Transverse colon (tissue), 4 donors: ENCODE measurements at regions of chr15 and their contacts with region 1.

Region 1: DNA sequence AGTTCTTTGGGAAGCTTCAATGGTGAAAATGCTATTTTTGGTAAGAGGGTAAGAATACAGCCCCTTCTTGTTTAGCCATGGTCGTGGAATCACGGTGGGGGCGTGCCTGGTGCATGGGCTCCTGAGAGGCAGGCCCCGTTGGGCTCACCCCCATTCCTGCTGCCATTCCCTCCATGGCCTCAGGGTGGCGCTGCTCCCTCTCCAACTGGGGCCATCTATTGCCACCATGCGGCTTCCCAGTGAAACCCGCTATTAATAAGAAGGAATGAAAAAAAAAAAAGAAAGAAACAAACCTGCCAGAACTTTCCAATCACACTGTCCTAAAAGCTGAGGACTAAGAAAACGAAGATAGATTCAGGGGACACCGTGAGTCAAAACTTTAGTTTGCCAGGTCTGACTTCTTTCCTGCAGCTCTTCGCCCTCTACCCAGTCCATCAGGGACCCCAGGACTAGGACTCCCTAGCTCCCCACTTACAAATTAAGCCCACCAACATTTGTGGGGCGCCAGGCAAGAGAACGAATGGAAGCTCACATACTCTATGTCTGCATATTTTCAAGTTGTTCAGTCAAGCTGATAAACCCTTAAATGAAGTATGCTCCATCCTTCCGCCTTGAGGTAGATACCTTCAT is 30.6 kb upstream of the ABHD2 start:
- DNase-seq: peak; percentile 86
- H3K4me3 ChIP-seq: no peak overlapping the region
- H3K27ac ChIP-seq: no peak overlapping the region
- H3K4me1 ChIP-seq: peaks cover 0 to 6% (median 0%) of the 10 kb centered on the region in 4 donors
- H3K27me3 ChIP-seq: no peaks in the 10 kb centered on the region
- CTCF ChIP-seq: peak; percentile 98 to 99 (median 99)
- EP300 ChIP-seq: no peak
- POLR2A ChIP-seq: no peak

Region 2: DNA sequence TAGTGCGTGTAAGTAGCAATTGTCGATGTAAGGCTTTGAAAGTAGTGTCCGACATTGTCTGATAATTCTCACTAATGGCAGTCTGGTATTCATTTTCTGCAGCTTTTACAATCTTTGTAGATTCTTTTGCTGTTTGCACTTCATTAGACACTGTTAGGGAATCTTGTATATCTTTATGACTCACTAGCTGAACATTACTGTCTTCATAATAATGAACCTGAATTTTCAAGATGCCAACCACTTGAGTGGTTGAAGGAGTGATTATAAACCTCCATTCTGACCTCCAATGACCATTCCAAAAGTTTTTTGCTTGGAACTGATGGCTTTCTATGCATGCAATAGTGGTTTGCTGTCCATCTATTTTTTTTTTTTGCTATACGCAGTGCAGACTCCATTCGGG is 68.0 kb before region 1 on chr15:
- in situ Hi-C with region 1: no loop called
- intact Hi-C with region 1: no loop called
- DNase-seq: no peak
- H3K4me3 ChIP-seq: no peak overlapping the region
- H3K27ac ChIP-seq: no peak overlapping the region
- H3K4me1 ChIP-seq: no peaks in the 10 kb centered on the region
- H3K27me3 ChIP-seq: peaks cover 4% of the 10 kb centered on the region
- CTCF ChIP-seq: no peak
- EP300 ChIP-seq: no peak
- POLR2A ChIP-seq: no peak

Region 3: GRCh38 chr15:89129123-89129815 is 71.7 kb after region 1 on chr15:
- in situ Hi-C with region 1: loop called in 1 of 4 experiments (anchors 10 kb)
- intact Hi-C with region 1: loop called (anchors 5 kb)
- DNase-seq: peak; percentile 66
- H3K4me3 ChIP-seq: no peak overlapping the region
- H3K27ac ChIP-seq: peak overlapping the region in 3 of 4 donors; percentile 11 to 43 (median 27)
- H3K4me1 ChIP-seq: peaks cover 4 to 39% (median 10%) of the 10 kb centered on the region in 4 donors
- H3K27me3 ChIP-seq: no peaks in the 10 kb centered on the region
- CTCF ChIP-seq: peak; percentile 70 to 81 (median 73)
- EP300 ChIP-seq: no peak
- POLR2A ChIP-seq: no peak

Region 4: GRCh38 chr15:89171136-89172072 is 113.8 kb after region 1 on chr15:
- in situ Hi-C with region 1: loop called (anchors 5 to 25 kb)
- intact Hi-C with region 1: loop called (anchors 5 kb)
- DNase-seq: peak; percentile 54
- H3K4me3 ChIP-seq: no peak overlapping the region
- H3K27ac ChIP-seq: no peak overlapping the region
- H3K4me1 ChIP-seq: peaks cover 0 to 17% (median 10%) of the 10 kb centered on the region in 4 donors
- H3K27me3 ChIP-seq: no peaks in the 10 kb centered on the region
- CTCF ChIP-seq: peak; percentile 59 to 73 (median 68)
- EP300 ChIP-seq: no peak
- POLR2A ChIP-seq: no peak

Region 5: GRCh38 chr15:89177633-89178306 is 120.2 kb after region 1 on chr15:
- in situ Hi-C with region 1: loop called (anchors 5 to 25 kb)
- intact Hi-C with region 1: loop called (anchors 5 kb)
- DNase-seq: peak; percentile 62
- H3K4me3 ChIP-seq: no peak overlapping the region
- H3K27ac ChIP-seq: no peak overlapping the region
- H3K4me1 ChIP-seq: no peaks in the 10 kb centered on the region
- H3K27me3 ChIP-seq: no peaks in the 10 kb centered on the region
- CTCF ChIP-seq: peak; percentile 74 to 82 (median 79)
- EP300 ChIP-seq: no peak
- POLR2A ChIP-seq: no peak